Mammary epithelial cell (primary cell): ENCODE measurements at regions of chr14 and their contacts with region 1.

Region 1: GRCh38 chr14:101774006-101774795 is 12.7 kb downstream of the PPP2R5C start:
- DNase-seq: no peak
- H3K4me3 ChIP-seq: no peak overlapping the region
- H3K27ac ChIP-seq: no peak overlapping the region
- H3K4me1 ChIP-seq: no peaks in the 10 kb centered on the region
- H3K27me3 ChIP-seq: no peaks in the 10 kb centered on the region
- CTCF ChIP-seq: no peak

Region 2: GRCh38 chr14:101754893-101755292 is 19.3 kb before region 1 on chr14:
- CTCF ChIA-PET with region 1: no interaction called
- dilution Hi-C with region 1: no loop called
- in situ Hi-C with region 1: no loop called
- intact Hi-C with region 1: no loop called
- DNase-seq: no peak
- H3K4me3 ChIP-seq: no peak overlapping the region
- H3K27ac ChIP-seq: no peak overlapping the region
- H3K4me1 ChIP-seq: peaks cover 6% of the 10 kb centered on the region
- H3K27me3 ChIP-seq: peaks cover 2% of the 10 kb centered on the region
- CTCF ChIP-seq: no peak

Region 3: DNA sequence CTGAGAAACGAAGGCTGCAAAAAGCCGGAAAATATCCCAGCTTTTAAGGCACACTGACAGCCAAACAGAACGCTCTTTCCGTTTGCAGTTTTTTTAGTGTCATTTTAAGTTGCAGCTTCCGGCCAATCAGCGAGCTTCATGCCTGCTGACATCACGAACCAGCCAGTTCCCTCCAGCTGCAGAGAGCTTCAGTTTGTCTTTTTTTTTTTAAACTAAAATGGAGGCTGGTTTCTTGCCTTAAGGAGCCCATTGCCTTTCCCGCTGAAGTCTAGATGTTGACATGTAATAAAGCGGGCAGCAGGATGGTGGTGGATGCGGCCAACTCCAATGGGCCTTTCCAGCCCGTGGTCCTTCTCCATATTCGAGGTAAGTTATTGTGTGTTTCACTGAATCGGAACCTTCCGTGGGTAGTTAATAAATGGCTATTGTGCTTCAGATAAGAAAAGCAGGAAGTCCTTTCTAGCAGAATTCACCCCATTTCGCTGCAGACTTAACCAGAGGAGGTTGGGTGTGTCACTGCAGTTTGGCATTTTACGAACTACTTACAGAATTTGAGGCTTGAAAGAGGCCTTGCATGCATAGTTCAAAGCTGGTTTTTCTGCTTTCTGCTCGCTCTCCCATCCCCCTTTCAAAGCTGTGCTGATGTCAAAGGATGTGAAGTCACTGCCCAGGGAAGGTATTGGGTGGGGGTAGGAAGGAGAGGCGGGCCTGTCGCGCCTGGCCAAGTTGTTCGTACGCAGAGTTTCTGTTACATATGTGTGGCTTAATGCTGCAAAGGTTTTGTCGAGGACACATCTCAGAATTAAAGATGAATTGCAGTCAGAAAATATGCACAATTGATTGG is 35.7 kb after region 1 on chr14:
- CTCF ChIA-PET with region 1: no interaction called
- dilution Hi-C with region 1: no loop called
- in situ Hi-C with region 1: no loop called
- intact Hi-C with region 1: loop called (anchors 5 kb)
- DNase-seq: peak; percentile 92
- H3K4me3 ChIP-seq: peak overlapping the region; percentile 68 to 78 (median 74)
- H3K27ac ChIP-seq: peak overlapping the region; percentile 98
- H3K4me1 ChIP-seq: peaks cover 4% of the 10 kb centered on the region
- H3K27me3 ChIP-seq: no peaks in the 10 kb centered on the region
- CTCF ChIP-seq: no peak

Region 4: DNA sequence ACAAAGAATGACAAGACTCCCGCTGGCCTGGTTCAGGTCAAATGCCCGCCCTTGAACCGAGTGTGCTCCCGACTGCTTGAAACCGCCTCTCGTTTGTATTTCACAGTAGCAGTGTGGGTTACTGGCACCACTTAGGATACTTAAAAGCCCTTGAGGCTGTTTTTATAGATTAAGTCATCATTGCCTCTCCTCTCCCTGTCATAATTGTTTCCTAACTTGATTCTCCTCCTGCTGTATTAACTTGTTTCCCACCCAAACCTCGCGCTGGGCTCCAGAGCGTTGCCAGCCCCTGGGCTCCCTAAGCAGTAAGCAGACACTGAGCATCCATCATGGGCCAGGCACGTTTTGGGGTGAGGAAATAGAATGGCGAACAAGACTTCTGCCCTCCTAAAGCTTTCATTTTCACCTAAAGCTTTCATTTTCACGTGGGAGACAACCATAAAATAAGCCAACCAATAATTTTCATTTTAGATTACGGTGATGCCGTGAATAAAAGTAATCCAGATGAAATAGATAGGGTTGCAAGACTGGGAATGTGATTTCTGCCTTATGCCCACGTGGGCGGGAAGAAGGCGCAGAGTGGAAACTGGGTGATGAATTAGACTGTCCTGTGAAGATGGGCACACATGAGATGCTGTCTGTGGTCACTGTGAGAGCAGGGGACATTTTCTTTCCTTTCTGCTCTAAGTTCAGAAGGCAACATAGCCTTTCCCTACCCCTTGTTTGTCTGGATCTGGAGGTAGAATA is 84.8 kb after region 1 on chr14:
- CTCF ChIA-PET with region 1: no interaction called
- dilution Hi-C with region 1: loop called (anchors 5 kb)
- in situ Hi-C with region 1: no loop called
- intact Hi-C with region 1: no loop called
- DNase-seq: no peak
- H3K4me3 ChIP-seq: no peak overlapping the region
- H3K27ac ChIP-seq: no peak overlapping the region
- H3K4me1 ChIP-seq: no peaks in the 10 kb centered on the region
- H3K27me3 ChIP-seq: no peaks in the 10 kb centered on the region
- CTCF ChIP-seq: no peak

Region 5: GRCh38 chr14:101917413-101918017 is 143.3 kb after region 1 on chr14:
- CTCF ChIA-PET with region 1: interaction called, 4 read pairs
- dilution Hi-C with region 1: loop called (anchors 5 kb)
- in situ Hi-C with region 1: no loop called
- intact Hi-C with region 1: loop called (anchors 10 kb)
- DNase-seq: no peak
- H3K4me3 ChIP-seq: no peak overlapping the region
- H3K27ac ChIP-seq: no peak overlapping the region
- H3K4me1 ChIP-seq: no peaks in the 10 kb centered on the region
- H3K27me3 ChIP-seq: no peaks in the 10 kb centered on the region
- CTCF ChIP-seq: no peak

Region 6: DNA sequence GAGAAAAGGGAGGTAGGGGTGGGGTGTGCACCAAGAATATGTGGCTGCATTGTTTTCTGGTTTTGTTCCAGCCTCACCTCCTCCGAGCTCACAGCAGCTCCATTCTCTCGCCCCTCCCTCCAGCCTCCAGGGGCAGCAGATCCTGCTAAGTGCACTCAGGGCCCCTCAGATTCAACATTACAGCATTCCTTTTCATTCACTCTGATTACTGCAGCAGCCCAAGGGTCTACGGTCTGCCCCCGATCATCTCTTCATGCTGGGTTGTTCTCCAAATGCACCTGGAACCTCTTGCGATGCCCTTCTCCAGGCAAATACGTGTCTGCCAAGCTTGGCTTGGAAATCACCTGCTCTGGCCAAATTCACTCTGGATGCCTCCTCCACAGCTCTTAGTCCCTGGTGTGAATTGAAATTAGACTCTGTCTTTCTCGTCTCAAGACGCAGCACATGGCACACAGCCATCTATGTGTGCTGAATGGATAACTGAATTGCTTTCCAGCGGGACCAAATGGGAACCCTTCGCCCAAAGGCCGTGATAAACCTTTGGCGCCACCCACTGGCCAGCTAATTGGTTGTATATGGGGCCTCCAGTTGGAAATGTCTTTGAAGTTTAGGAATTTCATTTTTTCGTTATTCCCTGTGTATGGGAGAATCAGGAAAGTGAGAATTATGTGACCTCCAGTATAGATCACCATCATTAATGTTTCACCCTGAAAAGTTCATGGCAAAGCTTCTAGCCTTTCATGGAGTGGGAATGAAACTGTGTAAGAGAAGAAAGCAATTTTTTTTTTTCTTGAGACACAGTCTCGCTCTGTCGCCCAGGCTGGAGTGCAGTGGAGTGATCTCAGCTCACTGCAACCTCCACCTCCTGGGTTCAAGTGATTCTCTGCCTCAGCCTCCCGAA is 322.3 kb after region 1 on chr14:
- CTCF ChIA-PET with region 1: interaction called, 4 read pairs
- dilution Hi-C with region 1: no loop called
- in situ Hi-C with region 1: no loop called
- intact Hi-C with region 1: loop called (anchors 2 kb)
- DNase-seq: peak; percentile 55
- H3K4me3 ChIP-seq: no peak overlapping the region
- H3K27ac ChIP-seq: no peak overlapping the region
- H3K4me1 ChIP-seq: peaks cover 19% of the 10 kb centered on the region
- H3K27me3 ChIP-seq: no peaks in the 10 kb centered on the region
- CTCF ChIP-seq: peak; percentile 77 to 85